IMR-90 (cell line): ENCODE measurements at regions of chr4 and their contacts with region 1.

Region 1: DNA sequence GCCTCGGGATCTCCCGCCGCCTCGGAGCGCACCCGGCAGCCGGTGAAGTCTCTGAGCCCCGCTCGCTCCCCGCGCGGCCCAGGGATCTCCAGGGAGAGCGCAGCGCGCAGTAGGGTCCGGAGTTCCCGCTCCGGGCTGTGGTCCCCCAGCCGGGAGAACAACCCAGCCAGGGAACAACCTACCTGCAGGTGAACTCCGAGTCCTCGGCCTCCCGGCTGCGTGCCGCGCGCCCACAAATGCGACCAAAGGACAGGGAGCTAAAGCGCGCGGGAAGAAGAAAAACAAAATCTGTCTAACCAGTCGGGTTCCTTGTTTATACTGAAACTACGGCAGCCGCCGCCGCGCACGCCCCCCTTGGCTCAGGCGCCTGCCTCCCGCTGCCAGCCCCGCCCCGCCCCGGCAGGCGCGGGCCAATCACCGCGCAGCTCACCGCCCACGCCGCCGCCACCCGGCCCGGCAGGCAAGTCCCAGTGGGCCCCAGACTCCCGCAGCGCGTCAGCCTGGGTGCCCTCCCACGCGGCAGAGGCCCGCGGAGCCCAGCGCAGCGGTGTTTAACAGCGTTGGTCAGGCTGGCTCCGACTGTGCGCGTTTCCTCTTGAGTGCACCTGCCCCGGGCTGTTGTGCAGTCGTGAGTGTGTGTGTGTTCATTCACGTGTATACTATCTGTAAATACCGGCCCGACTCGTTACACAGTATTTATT is at the start of gene RASGEF1B:
- DNase-seq: peak; percentile 62
- ATAC-seq: peak; percentile 95
- H3K4me3 ChIP-seq: peak within 1 kb of the TSS; percentile 77
- H3K27ac ChIP-seq: no peak within 1 kb of the TSS
- H3K4me1 ChIP-seq: peaks cover 2% of the 10 kb centered on the region; the same call in 1 of the 2 replicates
- H3K27me3 ChIP-seq: peaks cover 27% of the 10 kb centered on the region
- CTCF ChIP-seq: no peak
- POLR2A ChIP-seq: no peak
- RAD21 ChIP-seq: no peak
- total RNA-seq, gene RASGEF1B: 0.28 and 0.36 TPM in 2 replicates

Region 2: GRCh38 chr4:80913381-80913780 is 558.4 kb before region 1 on chr4:
- CTCF ChIA-PET with region 1: no interaction called
- POLR2A ChIA-PET with region 1: no interaction called
- dilution Hi-C with region 1: no loop called
- in situ Hi-C with region 1: no loop called
- intact Hi-C with region 1: no loop called
- DNase-seq: no peak
- ATAC-seq: no peak
- H3K4me3 ChIP-seq: no peak overlapping the region
- H3K27ac ChIP-seq: no peak overlapping the region
- H3K4me1 ChIP-seq: no peaks in the 10 kb centered on the region
- H3K27me3 ChIP-seq: no peaks in the 10 kb centered on the region
- CTCF ChIP-seq: no peak
- POLR2A ChIP-seq: no peak
- RAD21 ChIP-seq: no peak

Region 3: DNA sequence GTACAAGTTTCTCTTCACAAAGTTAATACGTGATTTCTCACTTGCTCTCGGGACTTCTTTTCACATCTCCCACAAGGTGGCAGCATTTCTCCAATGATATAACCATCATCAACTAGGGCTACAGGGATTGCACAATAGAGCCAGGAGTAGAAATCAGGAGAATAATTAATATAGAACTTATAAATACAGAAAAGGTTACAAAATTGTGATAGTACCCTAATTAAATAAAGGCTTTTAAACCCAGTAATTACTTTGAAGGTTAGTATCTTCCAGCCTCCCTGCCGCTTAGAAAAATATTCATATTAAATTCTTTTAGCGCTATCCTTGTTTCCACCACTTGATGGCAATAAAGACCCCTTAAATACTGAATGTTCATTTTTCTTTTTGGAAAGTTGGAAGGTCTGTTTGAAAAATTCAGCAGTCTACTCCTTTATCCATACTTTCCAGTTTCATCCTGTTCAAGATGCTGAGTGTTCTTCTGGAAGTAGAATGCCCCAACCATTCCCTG is 65.8 kb before region 1 on chr4:
- CTCF ChIA-PET with region 1: no interaction called
- POLR2A ChIA-PET with region 1: no interaction called
- dilution Hi-C with region 1: no loop called
- in situ Hi-C with region 1: no loop called
- intact Hi-C with region 1: loop called (anchors 1 kb)
- DNase-seq: peak; percentile 77
- ATAC-seq: peak; percentile 77
- H3K4me3 ChIP-seq: no peak overlapping the region
- H3K27ac ChIP-seq: no peak overlapping the region
- H3K4me1 ChIP-seq: no peaks in the 10 kb centered on the region
- H3K27me3 ChIP-seq: no peaks in the 10 kb centered on the region; the same call in none of the 2 replicates
- CTCF ChIP-seq: peak; percentile 72
- POLR2A ChIP-seq: no peak
- RAD21 ChIP-seq: peak; percentile 64

Region 4: GRCh38 chr4:81565142-81565870 is 93.6 kb after region 1 on chr4:
- CTCF ChIA-PET with region 1: interaction called, 3 read pairs
- POLR2A ChIA-PET with region 1: no interaction called
- dilution Hi-C with region 1: no loop called
- in situ Hi-C with region 1: no loop called
- intact Hi-C with region 1: loop called (anchors 5 kb)
- DNase-seq: no peak
- ATAC-seq: peak; percentile 80
- H3K4me3 ChIP-seq: no peak overlapping the region
- H3K27ac ChIP-seq: no peak overlapping the region
- H3K4me1 ChIP-seq: no peaks in the 10 kb centered on the region
- H3K27me3 ChIP-seq: no peaks in the 10 kb centered on the region
- CTCF ChIP-seq: no peak
- POLR2A ChIP-seq: no peak
- RAD21 ChIP-seq: no peak

Region 5: GRCh38 chr4:81844717-81845116 is 373.0 kb after region 1 on chr4:
- CTCF ChIA-PET with region 1: interaction called, 13 read pairs
- POLR2A ChIA-PET with region 1: no interaction called
- dilution Hi-C with region 1: no loop called
- in situ Hi-C with region 1: loop called (anchors 5 kb)
- intact Hi-C with region 1: loop called (anchors 1 kb)
- DNase-seq: peak; percentile 57
- ATAC-seq: peak; percentile 97
- H3K4me3 ChIP-seq: no peak overlapping the region
- H3K27ac ChIP-seq: no peak overlapping the region
- H3K4me1 ChIP-seq: no peaks in the 10 kb centered on the region
- H3K27me3 ChIP-seq: no peaks in the 10 kb centered on the region
- CTCF ChIP-seq: peak; percentile 76
- POLR2A ChIP-seq: no peak
- RAD21 ChIP-seq: peak; percentile 74

Region 6: GRCh38 chr4:82268050-82268825 is 796.5 kb after region 1 on chr4:
- CTCF ChIA-PET with region 1: interaction called, 5 read pairs
- POLR2A ChIA-PET with region 1: no interaction called
- dilution Hi-C with region 1: no loop called
- in situ Hi-C with region 1: no loop called
- intact Hi-C with region 1: loop called (anchors 1 kb)
- DNase-seq: peak; percentile 50
- ATAC-seq: peak; percentile 99
- H3K4me3 ChIP-seq: no peak overlapping the region
- H3K27ac ChIP-seq: no peak overlapping the region
- H3K4me1 ChIP-seq: no peaks in the 10 kb centered on the region
- H3K27me3 ChIP-seq: peaks cover 3% of the 10 kb centered on the region; the same call in 1 of the 2 replicates
- CTCF ChIP-seq: peak; percentile 70
- POLR2A ChIP-seq: no peak
- RAD21 ChIP-seq: peak; percentile 67